ENCODE measurements at regions of chr15 and their contacts with region 1.

Region 1: GRCh38 chr15:90001683-90002427 is 731 bp downstream of the ZNF710 start:
- H3K4me3 Mint-ChIP-seq: peak overlapping the region; percentile 95
- H3K27ac Mint-ChIP-seq: peak overlapping the region; percentile 97
- H3K4me1 Mint-ChIP-seq: peaks cover 79% of the 10 kb centered on the region
- H3K27me3 Mint-ChIP-seq: no peaks in the 10 kb centered on the region

Region 2: GRCh38 chr15:89893696-89894455 is 108.0 kb before region 1 on chr15 and contains the start of gene AP3S2:
- intact Hi-C with region 1: loop called (anchors 5 kb)
- H3K4me3 Mint-ChIP-seq: peak within 1 kb of the TSS; percentile 95
- H3K27ac Mint-ChIP-seq: peak within 1 kb of the TSS; percentile 98
- H3K4me1 Mint-ChIP-seq: peaks cover 30% of the 10 kb centered on the region
- H3K27me3 Mint-ChIP-seq: no peaks in the 10 kb centered on the region

Region 3: GRCh38 chr15:89912674-89913396 is 89.0 kb before region 1 on chr15 and contains the start of gene ARPIN:
- intact Hi-C with region 1: loop called (anchors 2 kb)
- H3K4me3 Mint-ChIP-seq: peak within 1 kb of the TSS; percentile 87
- H3K27ac Mint-ChIP-seq: peak within 1 kb of the TSS; percentile 87
- H3K4me1 Mint-ChIP-seq: peaks cover 51% of the 10 kb centered on the region
- H3K27me3 Mint-ChIP-seq: peaks cover 2% of the 10 kb centered on the region

Region 4: DNA sequence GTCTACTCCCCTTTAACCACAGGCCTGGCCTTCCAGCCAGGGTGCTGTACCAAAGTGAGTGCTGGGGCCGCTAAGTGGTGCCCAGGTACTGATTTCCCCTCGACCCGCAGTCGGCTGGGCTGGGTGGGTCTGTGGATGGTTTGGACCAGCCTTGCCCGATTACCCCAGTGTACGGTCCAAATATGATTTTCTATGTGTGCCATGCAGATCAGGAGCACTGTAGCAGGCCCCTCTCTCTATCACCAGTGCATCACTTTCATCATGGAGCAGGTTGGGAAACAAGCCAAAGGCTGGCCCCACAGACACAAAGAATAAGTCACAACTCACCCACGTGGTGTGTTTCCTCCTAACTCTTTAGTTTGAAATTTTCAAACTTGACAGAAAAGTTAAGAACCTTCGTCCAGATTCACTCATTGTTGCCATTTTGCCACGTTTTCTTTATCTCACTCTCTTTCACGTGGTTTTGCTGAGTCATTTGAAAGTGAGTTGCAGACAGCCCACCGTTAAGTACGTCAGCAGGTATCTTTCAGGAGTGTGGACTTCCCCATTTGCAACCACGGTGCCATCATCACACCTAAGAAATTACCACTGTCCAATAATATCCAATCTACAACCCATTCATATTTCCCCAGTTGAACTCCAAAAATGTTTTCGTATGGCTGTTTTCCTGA is 36.2 kb after region 1 on chr15:
- intact Hi-C with region 1: loop called (anchors 5 kb)
- H3K4me3 Mint-ChIP-seq: no peak overlapping the region
- H3K27ac Mint-ChIP-seq: peak overlapping the region; percentile 88
- H3K4me1 Mint-ChIP-seq: peaks cover 95% of the 10 kb centered on the region
- H3K27me3 Mint-ChIP-seq: no peaks in the 10 kb centered on the region

Region 5: GRCh38 chr15:90071208-90071807 is 69.5 kb after region 1 on chr15:
- intact Hi-C with region 1: loop called (anchors 2 kb)
- H3K4me3 Mint-ChIP-seq: peak overlapping the region; percentile 13
- H3K27ac Mint-ChIP-seq: peak overlapping the region; percentile 76
- H3K4me1 Mint-ChIP-seq: peaks cover 41% of the 10 kb centered on the region
- H3K27me3 Mint-ChIP-seq: no peaks in the 10 kb centered on the region